ENCODE measurements at regions of chrX and their contacts with region 1.

Region 1: DNA sequence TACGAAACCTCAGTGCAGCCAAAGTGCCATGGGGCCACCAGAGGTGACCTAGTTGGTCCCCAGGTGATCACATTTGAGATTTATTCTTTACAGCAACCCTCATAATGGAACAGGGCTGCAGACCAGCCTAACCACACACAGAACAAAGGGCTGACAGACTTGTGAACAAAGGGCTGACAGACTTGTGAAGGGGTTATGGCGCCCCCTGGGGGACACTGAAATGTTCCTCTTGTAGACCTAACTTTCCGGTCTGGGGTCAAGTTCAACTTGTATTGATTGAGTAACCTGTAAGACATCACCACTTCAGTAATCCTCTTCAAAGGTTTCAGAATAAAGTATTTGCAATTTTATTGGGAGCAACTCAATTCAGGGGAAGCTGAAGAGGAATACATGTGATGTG is 175.9 kb upstream of the RPS6KA3 start:
- DNase-seq: peak; percentile 18 to 79 (median 64)
- H3K4me3 ChIP-seq: no peak overlapping the region
- H3K27ac ChIP-seq: no peak overlapping the region
- H3K27me3 ChIP-seq: peaks cover 0 to 81% (median 23%) of the 10 kb centered on the region in 45 donors
- CTCF ChIP-seq: peak; percentile 25 to 79 (median 62)

Region 2: DNA sequence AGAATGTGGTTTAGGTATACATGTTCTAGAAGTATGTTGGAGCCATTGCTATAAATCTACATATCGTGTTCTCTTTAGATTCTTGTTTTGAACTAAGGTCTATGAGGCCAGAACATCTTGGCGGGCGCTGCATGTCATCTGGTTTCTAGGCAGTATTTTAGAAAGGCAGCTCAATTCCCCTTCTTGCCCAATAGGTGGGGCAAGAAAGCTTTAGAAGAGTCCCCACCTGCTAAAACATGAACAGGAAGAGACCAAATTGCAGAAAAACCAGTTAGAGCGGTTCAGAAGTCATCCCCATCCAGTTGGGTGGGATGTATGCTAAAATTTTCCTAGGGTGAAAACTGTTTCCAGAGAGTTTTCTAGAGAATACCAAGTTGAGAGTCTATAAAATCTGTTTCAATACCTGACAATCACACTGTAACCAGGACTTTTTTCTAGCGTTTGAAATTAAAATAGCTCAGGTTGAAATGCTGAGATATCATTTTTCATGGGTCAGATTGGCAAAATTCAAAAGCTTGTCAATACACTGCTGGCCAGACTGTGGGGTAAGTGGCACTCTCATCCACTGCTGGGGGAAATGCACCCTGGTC is 537.7 kb before region 1 on chrX:
- intact Hi-C with region 1: loop called in 1 of 2 experiments (anchors 5 kb)
- DNase-seq: no peak
- H3K4me3 ChIP-seq: no peak overlapping the region
- H3K27ac ChIP-seq: no peak overlapping the region
- H3K27me3 ChIP-seq: peaks cover 0 to 45% (median 3%) of the 10 kb centered on the region in 45 donors
- CTCF ChIP-seq: peak in 55 of 56 donors; percentile 23 to 77 (median 61)

Region 3: GRCh38 chrX:20141281-20142220 is 301.0 kb before region 1 on chrX and contains the start of gene EIF1AX:
- intact Hi-C with region 1: loop called in 1 of 2 experiments (anchors 10 kb)
- DNase-seq: peak; percentile 97 to 99 (median 99)
- H3K4me3 ChIP-seq: peak within 1 kb of the TSS; percentile 57 to 95 (median 85)
- H3K27ac ChIP-seq: peak within 1 kb of the TSS in 54 of 59 donors; percentile 10 to 92 (median 77)
- H3K27me3 ChIP-seq: peaks cover 0 to 13% (median 0%) of the 10 kb centered on the region in 45 donors
- CTCF ChIP-seq: peak in 14 of 56 donors; percentile 2 to 46 (median 21)
- total RNA-seq, gene EIF1AX: 35.6 to 115 (median 87.7) TPM

Region 4: DNA sequence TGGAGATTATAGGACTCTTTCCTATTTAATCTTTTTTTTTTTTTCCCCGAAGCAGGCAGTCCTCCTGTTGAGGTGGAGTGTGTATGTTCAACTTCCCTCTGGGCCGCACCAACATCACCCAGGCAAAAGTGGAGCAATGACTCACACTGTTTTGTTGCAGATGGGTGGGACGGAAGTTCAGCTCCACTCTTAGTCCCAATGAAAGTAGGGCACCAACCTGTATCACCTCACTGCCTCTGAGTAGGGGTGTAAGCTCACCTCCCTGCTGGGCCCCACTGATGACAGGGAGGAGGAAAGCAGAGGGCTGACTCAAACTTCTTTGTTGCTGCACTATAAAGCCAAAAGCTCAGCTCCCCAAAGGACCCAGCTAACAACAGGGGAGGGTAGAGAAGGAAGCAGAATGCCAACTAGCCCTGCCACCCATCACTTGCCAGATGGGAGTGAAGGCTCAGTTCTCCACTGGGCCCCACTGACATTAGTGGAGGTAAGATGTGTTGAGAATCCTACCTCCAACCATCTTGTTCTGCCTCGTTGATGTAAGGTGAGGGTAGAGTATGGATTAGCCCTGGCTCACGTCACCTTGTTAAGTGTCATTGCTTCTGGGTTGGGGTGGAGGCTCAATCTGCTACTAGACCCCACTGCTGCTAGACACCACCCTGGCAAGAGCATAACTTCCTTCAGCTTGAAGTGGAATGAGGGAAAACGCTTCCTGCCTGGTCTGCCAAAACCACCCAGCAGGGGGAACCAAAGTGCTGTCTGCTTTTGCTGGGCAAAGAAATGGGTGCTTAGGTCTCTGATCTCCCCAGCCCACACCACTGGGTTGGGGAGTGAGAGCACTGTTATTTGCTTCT is 190.0 kb before region 1 on chrX:
- intact Hi-C with region 1: loop called in 1 of 2 experiments (anchors 5 kb)
- DNase-seq: peak in 1 of 10 donors; percentile 9
- H3K4me3 ChIP-seq: no peak overlapping the region
- H3K27ac ChIP-seq: no peak overlapping the region
- H3K27me3 ChIP-seq: peaks cover 0 to 48% (median 2%) of the 10 kb centered on the region in 45 donors
- CTCF ChIP-seq: peak in 51 of 56 donors; percentile 14 to 57 (median 39)

Region 5: GRCh38 chrX:20266810-20267606 is 175.6 kb before region 1 on chrX and contains the start of gene RPS6KA3:
- intact Hi-C with region 1: loop called in 1 of 2 experiments (anchors 5 kb)
- DNase-seq: peak; percentile 77 to 92 (median 88)
- H3K4me3 ChIP-seq: peak within 1 kb of the TSS; percentile 49 to 77 (median 63)
- H3K27ac ChIP-seq: peak within 1 kb of the TSS in 52 of 59 donors; percentile 4 to 89 (median 72)
- H3K27me3 ChIP-seq: peaks cover 0 to 48% (median 5%) of the 10 kb centered on the region in 45 donors
- CTCF ChIP-seq: no peak
- total RNA-seq, gene RPS6KA3: 17.2 to 40.7 (median 31.3) TPM

Region 6: DNA sequence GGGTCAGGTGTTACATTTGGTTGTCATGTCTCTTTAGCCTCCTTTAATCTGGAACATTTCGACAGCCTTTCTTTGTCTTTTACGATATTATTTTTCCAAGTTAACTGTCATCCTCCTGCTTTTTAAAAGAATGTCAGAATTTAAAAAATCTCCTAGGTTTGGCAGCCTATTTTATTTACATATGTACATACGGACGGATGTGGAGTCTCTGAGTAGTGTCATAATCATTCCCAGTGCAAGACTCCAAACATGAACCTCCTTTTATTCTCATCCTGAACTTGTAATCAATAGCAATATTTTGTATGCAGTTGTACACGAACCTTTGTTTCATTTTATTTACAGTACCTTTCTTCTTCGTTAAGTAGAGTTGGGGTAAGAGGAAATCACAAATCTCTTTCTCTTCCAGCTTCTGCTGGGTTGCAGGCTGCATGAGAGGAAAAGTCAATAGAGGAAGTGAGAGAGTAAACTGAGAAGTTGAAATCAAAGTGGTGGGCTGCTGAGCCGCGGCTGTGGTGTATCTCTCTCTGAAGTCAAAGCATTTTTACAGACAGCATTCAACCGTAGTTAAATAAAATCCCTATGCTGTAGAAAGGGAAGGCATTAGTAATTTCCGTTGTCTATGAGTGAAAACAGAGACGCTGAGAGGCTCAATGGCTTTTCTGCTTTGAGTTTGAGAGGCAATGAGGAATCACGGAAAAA is 122.0 kb before region 1 on chrX:
- intact Hi-C with region 1: no loop called
- DNase-seq: no peak
- H3K4me3 ChIP-seq: no peak overlapping the region
- H3K27ac ChIP-seq: no peak overlapping the region
- H3K27me3 ChIP-seq: peaks cover 0 to 47% (median 5%) of the 10 kb centered on the region in 45 donors
- CTCF ChIP-seq: no peak